CD4-positive, alpha-beta T cell (primary cell): ENCODE measurements at regions of chr1 and their contacts with region 1.

Region 1: DNA sequence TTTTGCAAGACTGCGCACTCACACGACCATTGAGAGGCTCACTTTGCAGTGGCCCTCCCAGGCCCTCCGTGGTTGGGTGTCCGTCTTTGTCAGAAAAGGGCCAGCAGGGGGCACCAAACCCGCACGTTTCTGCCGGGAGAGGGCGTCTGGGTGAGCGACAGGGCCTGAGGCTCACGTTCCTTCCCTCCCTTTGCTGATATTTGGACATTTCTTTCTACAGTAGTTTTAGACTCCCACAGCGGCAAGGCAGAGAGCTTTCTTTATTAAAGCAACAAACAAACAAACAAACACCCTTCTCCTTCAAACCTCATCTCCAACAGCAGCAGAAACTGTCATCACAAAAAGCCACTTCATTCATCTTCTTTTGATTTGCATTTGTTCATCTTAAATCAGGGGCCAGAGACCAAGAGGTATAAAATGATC is 79.2 kb upstream of the WDR26 start:
- DNase-seq: peak; percentile 68 to 89 (median 82)
- ATAC-seq: peak; percentile 83
- H3K4me3 ChIP-seq: no peak overlapping the region
- H3K4me3 Mint-ChIP-seq: no peak overlapping the region
- H3K27ac ChIP-seq: no peak overlapping the region
- H3K27ac Mint-ChIP-seq: no peak overlapping the region
- H3K4me1 ChIP-seq: no peaks in the 10 kb centered on the region
- H3K4me1 Mint-ChIP-seq: peaks cover 7% of the 10 kb centered on the region
- H3K27me3 ChIP-seq: no peaks in the 10 kb centered on the region
- H3K27me3 Mint-ChIP-seq: no peaks in the 10 kb centered on the region
- CTCF ChIP-seq: peak; percentile 98

Region 2: DNA sequence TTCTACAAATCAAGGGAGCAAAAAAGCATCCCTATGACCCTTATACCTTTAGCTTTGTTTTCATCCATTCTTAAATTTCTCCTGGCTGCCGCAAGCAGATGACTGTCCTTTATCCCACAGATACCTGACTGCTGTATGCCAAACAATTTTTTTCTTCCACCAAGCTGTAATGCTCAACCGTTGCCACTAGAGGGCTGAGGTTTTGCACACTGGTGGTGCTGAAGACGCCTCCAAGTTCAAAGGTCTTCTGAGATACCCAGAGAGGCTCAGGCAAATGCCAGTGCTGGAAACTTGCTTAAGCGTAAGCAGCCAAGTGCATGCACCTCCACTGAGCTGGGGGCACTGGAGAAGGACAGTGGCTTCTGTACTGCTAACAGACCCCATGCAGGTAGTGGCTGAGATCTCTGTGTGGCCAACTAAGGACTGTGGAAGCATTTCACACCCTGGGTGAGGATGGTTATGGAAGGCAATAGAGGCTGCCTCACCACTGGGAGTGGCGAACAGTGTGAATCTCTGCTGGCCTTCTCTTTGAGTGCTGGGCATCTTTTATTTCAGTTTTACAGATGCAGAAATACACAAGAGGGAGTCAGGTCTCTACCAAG is 130.9 kb after region 1 on chr1:
- CTCF ChIA-PET with region 1: no interaction called
- POLR2A ChIA-PET with region 1: no interaction called
- intact Hi-C with region 1: loop called (anchors 2 to 5 kb)
- DNase-seq: peak; percentile 13 to 78 (median 42)
- ATAC-seq: peak; percentile 85
- H3K4me3 ChIP-seq: no peak overlapping the region
- H3K4me3 Mint-ChIP-seq: no peak overlapping the region
- H3K27ac ChIP-seq: no peak overlapping the region
- H3K27ac Mint-ChIP-seq: no peak overlapping the region
- H3K4me1 ChIP-seq: peaks cover 3% of the 10 kb centered on the region
- H3K4me1 Mint-ChIP-seq: peaks cover under 1% of the 10 kb centered on the region
- H3K27me3 ChIP-seq: no peaks in the 10 kb centered on the region
- H3K27me3 Mint-ChIP-seq: peaks cover 4% of the 10 kb centered on the region
- CTCF ChIP-seq: peak; percentile 84

Region 3: DNA sequence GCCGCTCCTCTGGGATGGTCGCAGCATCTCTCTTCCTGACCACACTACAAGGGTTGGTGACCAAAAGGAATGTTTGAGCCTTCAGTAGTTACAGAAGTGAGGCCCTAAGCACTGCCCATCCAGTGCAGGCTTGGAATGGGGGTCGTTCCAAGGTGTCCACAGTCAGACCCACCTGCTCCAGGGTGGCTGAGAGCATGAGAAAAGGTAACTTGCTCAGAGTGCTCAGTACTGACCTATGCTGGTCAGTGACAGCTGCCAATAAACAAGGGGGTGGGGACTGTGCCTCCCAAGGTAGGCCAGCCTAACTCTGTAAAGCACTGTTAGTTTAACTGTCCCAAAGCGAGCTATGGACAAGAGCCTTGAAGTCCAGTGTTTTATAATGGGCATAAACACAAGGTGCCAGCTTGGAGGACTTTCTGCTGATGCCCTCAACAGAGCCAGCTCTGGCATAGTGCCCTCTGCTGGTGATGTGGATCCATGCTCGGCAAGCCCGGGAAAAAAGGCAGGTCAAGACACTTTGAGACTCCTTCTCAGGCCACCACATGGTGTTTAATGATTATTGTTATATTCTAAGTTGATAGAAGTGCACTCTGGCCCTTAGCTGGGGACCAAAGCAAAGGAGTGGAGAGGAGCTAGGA is 337.5 kb after region 1 on chr1:
- CTCF ChIA-PET with region 1: interaction called, 11 read pairs
- POLR2A ChIA-PET with region 1: no interaction called
- intact Hi-C with region 1: loop called (anchors 1 kb)
- DNase-seq: peak; percentile 16 to 64 (median 31)
- ATAC-seq: no peak
- H3K4me3 ChIP-seq: no peak overlapping the region
- H3K4me3 Mint-ChIP-seq: no peak overlapping the region
- H3K27ac ChIP-seq: no peak overlapping the region
- H3K27ac Mint-ChIP-seq: no peak overlapping the region
- H3K4me1 ChIP-seq: no peaks in the 10 kb centered on the region
- H3K4me1 Mint-ChIP-seq: no peaks in the 10 kb centered on the region
- H3K27me3 ChIP-seq: peaks cover 0 to 2% of the 10 kb centered on the region in 2 experiments
- H3K27me3 Mint-ChIP-seq: peaks cover 10% of the 10 kb centered on the region
- CTCF ChIP-seq: peak; percentile 56

Region 4: DNA sequence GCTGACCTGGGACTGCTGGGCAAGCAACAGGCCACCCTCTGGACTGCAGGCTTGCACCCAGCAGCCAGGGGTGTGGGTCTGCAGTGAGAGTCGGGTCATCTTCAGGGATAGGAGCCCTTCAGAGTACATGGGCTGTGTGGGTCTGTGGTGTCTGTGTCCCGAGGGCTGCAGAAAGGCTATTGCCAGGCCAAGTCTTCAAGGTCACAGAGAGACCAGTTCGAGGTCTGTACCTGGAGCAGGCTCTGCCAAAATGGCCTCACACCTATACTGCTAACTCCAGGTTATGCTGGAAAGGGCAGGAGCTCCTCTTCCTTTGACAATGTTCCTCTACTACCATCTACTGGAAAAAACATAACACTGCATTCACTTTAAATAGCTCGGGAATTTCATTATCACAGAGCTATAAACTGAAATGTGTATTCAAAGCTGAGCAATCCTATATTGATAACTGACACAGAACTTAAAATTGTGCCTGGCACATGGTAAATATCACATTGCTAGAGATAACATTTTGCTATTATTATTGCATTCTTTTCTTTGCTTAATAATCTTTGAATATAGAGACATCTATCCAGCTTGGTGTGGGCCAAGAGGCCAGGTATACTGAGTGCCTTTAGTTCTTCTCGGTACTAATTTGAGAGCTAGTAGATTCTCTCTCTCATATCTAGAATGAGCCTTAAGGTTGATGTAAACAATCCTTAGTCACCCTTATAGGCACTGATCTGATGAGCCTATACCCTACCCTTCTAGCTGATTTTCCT is 408.8 kb after region 1 on chr1:
- CTCF ChIA-PET with region 1: interaction called, 18 read pairs
- POLR2A ChIA-PET with region 1: interaction called, 4 read pairs
- intact Hi-C with region 1: loop called in 1 of 2 experiments (anchors 2 kb)
- DNase-seq: peak in 4 of 14 experiments; percentile 4 to 23 (median 16)
- ATAC-seq: no peak
- H3K4me3 ChIP-seq: no peak overlapping the region
- H3K4me3 Mint-ChIP-seq: no peak overlapping the region
- H3K27ac ChIP-seq: no peak overlapping the region
- H3K27ac Mint-ChIP-seq: no peak overlapping the region
- H3K4me1 ChIP-seq: no peaks in the 10 kb centered on the region
- H3K4me1 Mint-ChIP-seq: no peaks in the 10 kb centered on the region
- H3K27me3 ChIP-seq: no peaks in the 10 kb centered on the region
- H3K27me3 Mint-ChIP-seq: peaks cover 29% of the 10 kb centered on the region
- CTCF ChIP-seq: peak; percentile 58

Region 5: DNA sequence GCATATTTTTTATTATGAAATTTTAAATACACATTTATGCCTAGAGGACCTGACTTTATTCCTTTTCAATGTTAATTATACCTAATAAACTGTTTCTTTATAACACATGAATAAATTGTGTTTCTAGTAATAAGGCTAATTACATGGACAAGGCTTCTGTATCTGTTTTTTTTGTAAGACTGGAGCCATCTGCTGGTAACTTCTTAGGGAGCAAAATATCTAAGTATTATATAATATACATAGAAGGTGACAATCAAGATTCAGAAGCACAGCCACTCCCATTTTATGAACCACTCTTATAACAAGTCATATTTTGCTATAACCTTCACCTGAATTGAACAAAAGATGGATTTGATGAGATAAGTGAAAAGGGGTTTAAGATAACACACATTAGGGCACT is 829.8 kb after region 1 on chr1:
- CTCF ChIA-PET with region 1: no interaction called
- POLR2A ChIA-PET with region 1: no interaction called
- intact Hi-C with region 1: loop called in 1 of 2 experiments (anchors 10 kb)
- DNase-seq: peak in 3 of 14 experiments; percentile 11 to 29 (median 19)
- ATAC-seq: no peak
- H3K4me3 ChIP-seq: no peak overlapping the region
- H3K4me3 Mint-ChIP-seq: no peak overlapping the region
- H3K27ac ChIP-seq: no peak overlapping the region
- H3K27ac Mint-ChIP-seq: no peak overlapping the region
- H3K4me1 ChIP-seq: no peaks in the 10 kb centered on the region
- H3K4me1 Mint-ChIP-seq: no peaks in the 10 kb centered on the region
- H3K27me3 ChIP-seq: peaks cover 0 to 27% of the 10 kb centered on the region in 2 experiments
- H3K27me3 Mint-ChIP-seq: peaks cover 43% of the 10 kb centered on the region
- CTCF ChIP-seq: peak; percentile 21

Region 6: GRCh38 chr1:225977937-225978748 is 1464.3 kb after region 1 on chr1:
- CTCF ChIA-PET with region 1: no interaction called
- POLR2A ChIA-PET with region 1: no interaction called
- intact Hi-C with region 1: loop called in 1 of 2 experiments (anchors 10 kb)
- DNase-seq: peak in 1 of 14 experiments; percentile 7
- ATAC-seq: no peak
- H3K4me3 ChIP-seq: no peak overlapping the region
- H3K4me3 Mint-ChIP-seq: no peak overlapping the region
- H3K27ac ChIP-seq: no peak overlapping the region
- H3K27ac Mint-ChIP-seq: no peak overlapping the region
- H3K4me1 ChIP-seq: peaks cover 5% of the 10 kb centered on the region
- H3K4me1 Mint-ChIP-seq: peaks cover 6% of the 10 kb centered on the region
- H3K27me3 ChIP-seq: no peaks in the 10 kb centered on the region
- H3K27me3 Mint-ChIP-seq: no peaks in the 10 kb centered on the region
- CTCF ChIP-seq: no peak